Activated T-helper 2 cell treated with anti-CD3 and anti-CD28 coated beads, Interferon-gamma antibody, Interleukin-2, Interleukin-4, amounts not matched to agents 10 μg/mL and 5 μg/mL and 100 μg/mL, durations not matched to agents 14 hours and 24 hours and 36 hours (primary cell): ENCODE measurements at regions of chr1 and their contacts with region 1.

Region 1: GRCh38 chr1:200620273-200621131 is at the start of gene KIF14:
- DNase-seq: peak; percentile 92
- H3K4me3 Mint-ChIP-seq: peak within 1 kb of the TSS; percentile 91
- H3K27ac Mint-ChIP-seq: peak within 1 kb of the TSS; percentile 87
- H3K4me1 Mint-ChIP-seq: peaks cover 47% of the 10 kb centered on the region
- H3K27me3 Mint-ChIP-seq: no peaks in the 10 kb centered on the region
- total RNA-seq, gene KIF14: 13.8 and 14.9 TPM in 2 replicates

Region 2: DNA sequence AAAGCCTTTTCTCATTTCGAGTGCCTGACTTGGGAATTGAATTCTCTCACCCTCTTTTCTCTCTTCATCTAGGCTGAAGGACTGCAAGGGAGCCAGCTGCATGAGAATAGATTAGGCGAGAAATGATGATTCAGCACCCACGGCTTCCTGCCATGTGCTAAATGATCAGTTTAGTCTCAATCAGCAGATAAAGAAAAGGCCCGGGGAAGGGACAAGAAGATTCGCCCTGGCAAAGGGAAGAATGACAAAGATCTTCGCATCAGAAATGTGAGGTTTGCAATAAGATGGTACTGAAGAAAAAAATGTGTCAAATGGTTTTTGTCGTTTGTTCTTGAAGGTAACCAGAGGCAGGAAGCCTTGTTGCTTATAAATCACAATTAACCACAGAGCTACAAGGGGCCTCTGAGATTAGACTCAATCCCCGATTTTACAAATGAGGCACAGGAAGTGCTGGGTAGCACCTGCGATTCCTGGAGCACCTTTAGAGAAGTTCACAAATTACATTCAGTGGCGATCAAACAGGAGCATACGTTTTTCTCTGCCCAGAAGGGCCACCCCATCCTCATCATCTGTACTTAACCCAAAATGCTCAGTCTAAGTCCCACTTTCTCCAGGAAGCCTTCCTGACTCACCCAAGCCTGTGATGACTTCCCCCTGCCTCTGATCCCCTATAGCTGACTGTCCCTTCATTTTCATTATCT is 394.1 kb before region 1 on chr1:
- intact Hi-C with region 1: no loop called
- DNase-seq: no peak
- H3K4me3 Mint-ChIP-seq: no peak overlapping the region
- H3K27ac Mint-ChIP-seq: no peak overlapping the region
- H3K4me1 Mint-ChIP-seq: peaks cover 14% of the 10 kb centered on the region
- H3K27me3 Mint-ChIP-seq: peaks cover 28% of the 10 kb centered on the region

Region 3: GRCh38 chr1:200669314-200670241 is 49.1 kb after region 1 on chr1 and contains the start of gene DDX59:
- intact Hi-C with region 1: loop called (anchors 1 kb)
- DNase-seq: peak; percentile 89
- H3K4me3 Mint-ChIP-seq: peak within 1 kb of the TSS; percentile 93
- H3K27ac Mint-ChIP-seq: peak within 1 kb of the TSS; percentile 92
- H3K4me1 Mint-ChIP-seq: peaks cover 25% of the 10 kb centered on the region
- H3K27me3 Mint-ChIP-seq: no peaks in the 10 kb centered on the region
- total RNA-seq, gene DDX59: 18.9 and 20.4 TPM in 2 replicates

Region 4: GRCh38 chr1:200684015-200684414 is 63.5 kb after region 1 on chr1:
- intact Hi-C with region 1: no loop called
- DNase-seq: no peak
- H3K4me3 Mint-ChIP-seq: no peak overlapping the region
- H3K27ac Mint-ChIP-seq: no peak overlapping the region
- H3K4me1 Mint-ChIP-seq: no peaks in the 10 kb centered on the region
- H3K27me3 Mint-ChIP-seq: peaks cover 14% of the 10 kb centered on the region

Region 5: DNA sequence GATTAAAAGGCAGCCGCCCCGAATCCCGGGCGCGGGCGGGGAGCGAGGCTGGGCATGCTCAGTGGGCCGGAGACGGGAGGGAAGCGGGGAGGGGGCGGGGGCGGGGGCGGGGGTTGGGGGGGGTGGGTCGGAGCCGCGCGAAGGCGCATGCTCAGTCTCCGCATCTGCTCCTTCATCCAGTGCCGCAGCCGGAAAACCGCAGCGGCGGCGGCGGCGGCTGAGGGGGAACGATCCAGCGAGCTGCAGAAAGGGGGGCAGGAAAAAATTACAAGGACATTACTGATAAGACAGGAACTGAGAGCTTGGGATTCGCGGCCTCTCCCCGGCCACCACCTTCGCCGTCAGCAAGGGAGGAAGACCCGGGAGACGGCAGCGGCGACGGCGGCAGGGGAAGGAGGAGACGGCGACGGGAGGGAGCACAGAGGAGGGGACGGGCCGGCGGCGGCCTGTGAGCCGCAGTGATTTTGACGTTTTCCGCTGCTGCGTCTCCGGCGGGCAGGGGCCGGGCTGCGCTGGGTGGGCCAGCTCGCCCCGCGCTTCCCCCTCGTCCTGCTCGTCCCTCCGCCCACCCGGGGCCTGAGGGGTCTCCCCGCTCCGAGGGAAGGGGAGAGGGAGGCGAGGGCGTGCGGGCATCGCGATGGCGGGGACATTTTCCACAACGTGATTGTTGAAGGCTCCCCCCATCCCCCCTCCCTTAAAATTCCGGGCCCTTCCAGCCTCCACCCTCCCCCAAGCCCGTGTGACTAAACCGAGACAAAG is 118.4 kb after region 1 on chr1 and contains the start of gene CAMSAP2:
- intact Hi-C with region 1: loop called (anchors 1 kb)
- DNase-seq: peak; percentile 52
- H3K4me3 Mint-ChIP-seq: peak within 1 kb of the TSS; percentile 83
- H3K27ac Mint-ChIP-seq: peak within 1 kb of the TSS; percentile 29
- H3K4me1 Mint-ChIP-seq: peaks cover 21% of the 10 kb centered on the region
- H3K27me3 Mint-ChIP-seq: peaks cover 49% of the 10 kb centered on the region
- total RNA-seq, gene CAMSAP2: 0.52 and 0.97 TPM in 2 replicates

Region 6: GRCh38 chr1:200802865-200803512 is 182.5 kb after region 1 on chr1:
- intact Hi-C with region 1: loop called (anchors 1 kb)
- DNase-seq: peak; percentile 49
- H3K4me3 Mint-ChIP-seq: no peak overlapping the region
- H3K27ac Mint-ChIP-seq: no peak overlapping the region
- H3K4me1 Mint-ChIP-seq: peaks cover 2% of the 10 kb centered on the region
- H3K27me3 Mint-ChIP-seq: peaks cover 38% of the 10 kb centered on the region

Region 7: DNA sequence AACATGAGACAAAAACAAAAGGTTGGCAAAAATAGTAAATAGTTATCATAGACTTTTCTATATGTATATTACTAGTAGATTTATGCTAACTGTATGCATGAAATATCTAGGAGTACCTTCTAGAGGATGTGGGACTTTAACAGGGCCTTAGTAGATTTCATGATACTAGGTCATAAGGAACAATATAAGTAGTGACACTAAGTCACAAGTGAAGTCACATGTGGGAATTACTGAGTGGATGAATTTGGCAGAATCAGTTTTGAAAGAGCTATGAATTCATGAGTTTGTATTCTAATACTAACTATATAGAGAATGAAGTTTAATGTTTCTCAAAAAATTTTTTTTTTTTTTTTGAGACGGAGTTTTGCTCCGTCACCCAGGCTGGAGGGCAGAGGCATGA is 199.2 kb after region 1 on chr1:
- intact Hi-C with region 1: no loop called
- DNase-seq: no peak
- H3K4me3 Mint-ChIP-seq: no peak overlapping the region
- H3K27ac Mint-ChIP-seq: no peak overlapping the region
- H3K4me1 Mint-ChIP-seq: no peaks in the 10 kb centered on the region
- H3K27me3 Mint-ChIP-seq: peaks cover 17% of the 10 kb centered on the region

Region 8: DNA sequence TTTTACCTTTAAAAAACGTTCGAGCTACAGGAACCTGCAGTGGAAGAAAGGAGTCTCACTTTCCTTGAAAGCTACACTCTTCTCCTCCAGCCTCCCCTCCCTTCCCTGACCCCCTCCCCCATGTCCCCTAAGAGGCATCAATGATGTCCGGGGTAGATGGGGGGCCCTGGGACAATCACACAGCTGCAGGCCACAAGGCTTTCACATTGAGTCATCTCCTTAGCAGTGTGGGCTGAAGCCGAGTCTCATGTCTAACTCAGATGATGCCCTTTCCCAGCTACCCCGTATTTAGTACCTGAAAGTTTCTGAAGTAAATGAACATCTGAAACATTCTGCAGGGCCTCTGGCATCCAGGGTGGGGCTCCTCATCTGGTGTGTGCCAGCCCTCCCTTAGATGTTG is 246.0 kb after region 1 on chr1:
- intact Hi-C with region 1: loop called (anchors 10 kb)
- DNase-seq: no peak
- H3K4me3 Mint-ChIP-seq: no peak overlapping the region
- H3K27ac Mint-ChIP-seq: no peak overlapping the region
- H3K4me1 Mint-ChIP-seq: peaks cover 24% of the 10 kb centered on the region
- H3K27me3 Mint-ChIP-seq: peaks cover 50% of the 10 kb centered on the region

Region 9: GRCh38 chr1:201114236-201115131 is 494.0 kb after region 1 on chr1:
- intact Hi-C with region 1: loop called (anchors 10 kb)
- DNase-seq: peak; percentile 54
- H3K4me3 Mint-ChIP-seq: peak overlapping the region; percentile 80
- H3K27ac Mint-ChIP-seq: no peak overlapping the region
- H3K4me1 Mint-ChIP-seq: peaks cover 2% of the 10 kb centered on the region
- H3K27me3 Mint-ChIP-seq: peaks cover 43% of the 10 kb centered on the region